GM10248 (cell line): ENCODE measurements at regions of chr15 and their contacts with region 1.

Region 1: DNA sequence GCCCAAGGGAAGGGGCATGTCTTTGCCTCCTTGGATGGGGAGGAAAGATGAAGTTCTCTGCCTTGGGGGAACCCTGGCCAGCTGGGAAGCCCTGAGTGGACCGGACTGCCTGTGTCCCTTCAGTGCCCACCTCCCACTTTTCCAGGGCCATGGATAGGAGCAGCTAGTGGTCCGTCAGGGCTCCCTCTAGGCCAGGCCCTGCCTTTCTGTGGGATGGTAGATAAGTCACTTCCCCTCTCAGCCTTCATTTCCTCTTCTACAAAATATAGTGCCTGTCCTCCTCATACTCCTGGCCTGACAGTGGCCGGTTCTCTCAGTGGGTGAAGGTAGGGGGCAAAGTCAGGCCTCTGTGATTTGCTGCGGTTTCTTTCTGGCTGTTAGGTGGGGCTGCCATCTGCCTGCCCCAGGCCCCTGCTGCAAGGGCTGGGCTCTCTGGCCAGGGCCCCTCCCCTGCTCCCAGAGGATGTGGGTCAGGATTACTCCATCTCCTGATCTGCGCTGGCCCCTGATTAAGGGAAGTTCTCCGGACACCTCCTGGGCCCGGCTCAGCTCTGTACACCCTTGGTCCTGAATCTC is 1.4 kb downstream of the PLEKHO2 start:
- DNase-seq: no peak
- CTCF ChIP-seq: no peak

Region 2: DNA sequence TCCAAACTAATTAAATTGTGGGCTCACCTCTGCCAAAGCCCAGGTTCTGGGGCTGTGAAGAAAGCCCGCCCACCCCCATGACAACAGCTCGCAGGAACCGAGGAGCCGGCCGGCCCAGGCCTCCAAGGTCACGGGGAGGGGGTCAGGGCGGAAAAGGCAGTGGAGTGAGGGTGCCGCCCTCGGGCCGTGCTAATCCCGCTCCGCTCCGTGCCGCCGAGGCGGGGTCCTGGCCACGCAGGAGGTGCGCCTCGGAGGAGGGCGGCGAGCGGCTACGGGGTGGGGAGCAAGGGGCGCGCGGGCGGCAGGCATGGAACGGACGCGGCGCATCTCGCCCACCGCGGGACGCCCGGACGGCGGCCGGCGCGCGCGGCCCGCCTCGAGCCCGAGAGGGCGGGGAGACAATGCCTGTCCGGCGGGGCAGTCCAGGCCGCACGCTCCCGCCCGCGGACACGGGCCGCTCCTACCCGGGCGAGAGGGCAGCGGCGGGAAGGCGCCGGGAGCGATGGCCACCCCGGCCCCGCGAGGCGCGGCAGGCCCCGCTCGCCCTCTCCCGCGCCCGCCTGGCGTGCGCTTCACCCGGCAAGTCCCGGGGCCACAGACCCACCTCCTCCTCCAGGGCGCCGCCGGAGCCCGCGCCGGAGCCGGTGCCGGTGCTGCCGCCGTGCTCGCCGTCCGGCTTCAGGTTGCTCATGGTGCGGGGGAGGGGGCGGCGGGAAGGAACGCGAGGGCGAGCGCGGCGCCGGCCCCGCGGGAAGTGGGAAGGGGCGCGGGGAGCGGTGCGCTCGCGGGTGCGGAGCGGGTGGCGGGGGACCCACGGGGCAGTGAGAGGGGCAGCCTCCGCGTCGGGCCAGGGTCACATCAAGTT is 68.2 kb before region 1 on chr15:
- CTCF ChIA-PET with region 1: no interaction called
- POLR2A ChIA-PET with region 1: no interaction called
- DNase-seq: no peak
- CTCF ChIP-seq: no peak

Region 3: DNA sequence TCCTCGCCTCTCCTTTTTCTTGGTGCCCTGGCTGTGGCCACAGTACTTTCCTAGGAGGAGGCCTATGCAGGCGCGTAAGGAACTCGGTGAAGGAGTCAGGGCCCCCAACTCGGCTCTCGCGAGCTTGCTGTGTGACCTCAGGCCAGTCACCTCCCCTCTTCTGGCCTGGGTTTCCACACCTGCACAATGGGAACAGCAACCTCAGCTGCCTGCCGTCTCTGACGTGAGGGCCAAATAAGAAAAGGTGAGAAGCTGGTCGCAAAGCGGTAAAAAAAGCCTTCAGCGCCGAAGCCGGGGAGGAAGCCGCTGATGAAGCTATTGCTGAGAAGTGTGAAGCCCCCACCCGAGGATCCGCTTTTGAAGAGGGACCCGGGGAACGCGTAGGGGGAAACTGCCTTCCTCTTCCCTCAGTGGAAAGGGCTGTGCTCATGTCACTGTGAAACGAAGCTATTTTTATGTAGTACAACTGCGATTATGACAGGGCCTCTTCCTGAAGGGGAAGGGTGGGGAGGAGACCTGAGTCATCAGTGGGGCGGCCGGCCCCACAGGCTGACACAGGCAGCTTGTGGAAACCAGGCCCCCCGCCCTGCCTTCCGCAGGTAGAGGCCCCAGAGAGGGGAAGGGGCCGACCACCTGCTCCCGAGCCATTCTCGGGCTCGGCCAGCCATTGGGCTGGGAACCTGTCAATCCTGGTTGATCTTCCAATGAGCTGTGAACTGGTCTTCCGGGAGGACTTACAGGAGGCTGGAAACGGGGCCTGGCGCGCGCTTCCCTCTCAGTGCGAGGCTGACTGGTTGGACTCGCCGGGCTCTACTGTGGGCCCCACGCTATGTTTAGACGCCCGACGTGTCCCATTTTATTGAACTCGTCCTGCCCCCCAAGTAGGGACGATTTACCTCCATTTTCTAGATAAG is 50.7 kb after region 1 on chr15:
- CTCF ChIA-PET with region 1: interaction called, 6 read pairs
- POLR2A ChIA-PET with region 1: interaction called, 24 read pairs
- DNase-seq: peak; percentile 94
- CTCF ChIP-seq: no peak